ENCODE measurements at regions of chr19 and their contacts with region 1.

Region 1: DNA sequence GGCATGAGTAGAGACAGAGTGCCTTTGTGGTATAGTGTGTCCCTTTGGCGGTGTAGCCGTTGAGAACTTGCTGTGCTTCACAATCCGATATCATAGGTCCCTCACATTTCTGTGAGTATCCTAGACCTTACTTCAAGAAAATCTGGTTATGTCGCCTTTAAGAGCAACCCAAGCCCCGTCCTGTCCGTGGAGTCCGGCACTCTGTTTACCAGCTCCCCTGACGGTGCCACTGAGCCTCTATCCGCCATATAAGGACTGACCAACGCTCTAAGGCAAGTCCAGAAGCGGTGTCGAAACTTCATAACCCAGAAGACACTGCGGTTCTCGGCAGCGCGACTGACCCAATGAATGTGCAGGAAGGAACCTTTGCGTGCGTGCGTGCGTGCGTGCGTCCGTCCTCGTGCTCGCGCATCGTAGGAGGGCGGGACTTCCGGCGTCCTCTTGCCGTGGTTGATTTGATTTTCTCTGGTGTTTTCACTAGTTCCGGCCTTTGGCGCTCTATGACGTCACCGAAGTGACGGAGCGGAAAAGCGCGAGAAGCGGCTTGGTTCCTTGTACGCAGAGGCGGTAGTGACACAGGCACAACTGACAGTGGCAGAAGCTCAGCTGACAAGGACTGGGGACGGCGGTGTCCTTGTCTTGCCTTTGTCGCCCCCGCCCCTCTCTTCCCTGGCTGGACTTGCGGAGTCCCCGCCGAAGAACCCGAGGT is at the starts of genes TRAPPC2B and ZNF547:
- DNase-seq: peak; percentile 99
- ATAC-seq: peak; percentile 95
- H3K4me3 Mint-ChIP-seq: peak within 1 kb of the TSS; percentile 89
- H3K27ac Mint-ChIP-seq: peak within 1 kb of the TSS; percentile 92
- H3K4me1 Mint-ChIP-seq: peaks cover 14% of the 10 kb centered on the region
- H3K27me3 Mint-ChIP-seq: no peaks in the 10 kb centered on the region
- total RNA-seq, gene TRAPPC2B: 8.5 to 8.6 TPM
- total RNA-seq, gene ZNF547: 4.2 to 4.4 TPM

Region 2: GRCh38 chr19:57389730-57390598 is 26.8 kb after region 1 on chr19 and contains the start of gene ZNF548:
- CTCF ChIA-PET with region 1: interaction called, 3 read pairs
- POLR2A ChIA-PET with region 1: interaction called, 10 read pairs
- DNase-seq: peak; percentile 98
- ATAC-seq: peak; percentile 99
- H3K4me3 Mint-ChIP-seq: peak within 1 kb of the TSS; percentile 89
- H3K27ac Mint-ChIP-seq: peak within 1 kb of the TSS; percentile 95
- H3K4me1 Mint-ChIP-seq: peaks cover 44% of the 10 kb centered on the region
- H3K27me3 Mint-ChIP-seq: no peaks in the 10 kb centered on the region
- total RNA-seq, gene ZNF548: 27.4 to 28.0 TPM

Measured in activated CD8-positive, alpha-beta T cell treated with anti-CD3 and anti-CD28 coated beads, Interleukin-2, amount 10 ng/mL, durations not matched to agents 7 days and 5 days (primary cell).